ENCODE measurements at regions of chr1 and their contacts with region 1.

Region 1: GRCh38 chr1:19720973-19721372 is 56.3 kb downstream of the HTR6 start:
- DNase-seq: no peak
- H3K4me3 ChIP-seq: no peak overlapping the region
- H3K27ac ChIP-seq: no peak overlapping the region
- H3K4me1 ChIP-seq: no peaks in the 10 kb centered on the region
- H3K27me3 ChIP-seq: no peaks in the 10 kb centered on the region
- CTCF ChIP-seq: no peak

Region 2: GRCh38 chr1:19591482-19592091 is 129.4 kb before region 1 on chr1:
- CTCF ChIA-PET with region 1: no interaction called
- POLR2A ChIA-PET with region 1: interaction called, 10 read pairs
- intact Hi-C with region 1: no loop called
- DNase-seq: no peak
- H3K4me3 ChIP-seq: no peak overlapping the region
- H3K27ac ChIP-seq: no peak overlapping the region
- H3K4me1 ChIP-seq: peaks cover 5% of the 10 kb centered on the region
- H3K27me3 ChIP-seq: no peaks in the 10 kb centered on the region
- CTCF ChIP-seq: no peak

Region 3: GRCh38 chr1:19758227-19758830 is 37.4 kb after region 1 on chr1:
- CTCF ChIA-PET with region 1: no interaction called
- POLR2A ChIA-PET with region 1: no interaction called
- intact Hi-C with region 1: no loop called
- DNase-seq: no peak
- H3K4me3 ChIP-seq: no peak overlapping the region
- H3K27ac ChIP-seq: no peak overlapping the region
- H3K4me1 ChIP-seq: peaks cover 5% of the 10 kb centered on the region
- H3K27me3 ChIP-seq: no peaks in the 10 kb centered on the region
- CTCF ChIP-seq: no peak

Region 4: DNA sequence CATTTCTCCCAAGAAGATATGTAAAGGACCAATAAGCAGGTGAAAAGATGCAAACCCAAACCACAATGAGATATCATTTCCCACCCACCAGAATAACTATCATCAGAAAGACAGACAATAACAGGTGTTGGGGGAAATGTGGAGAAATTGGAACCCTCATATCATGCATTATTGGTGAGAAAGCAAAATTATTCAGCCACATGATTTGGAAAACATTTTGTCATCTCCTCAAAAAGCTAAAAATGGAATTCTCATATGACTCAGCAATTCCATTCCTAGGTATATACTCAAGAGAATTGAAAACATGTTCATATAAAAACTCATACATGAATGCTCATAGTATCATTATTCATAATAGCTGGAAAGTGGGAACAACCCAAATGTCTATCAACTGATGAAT is 119.3 kb after region 1 on chr1:
- CTCF ChIA-PET with region 1: no interaction called
- POLR2A ChIA-PET with region 1: no interaction called
- intact Hi-C with region 1: no loop called
- DNase-seq: no peak
- H3K4me3 ChIP-seq: no peak overlapping the region
- H3K27ac ChIP-seq: no peak overlapping the region
- H3K4me1 ChIP-seq: no peaks in the 10 kb centered on the region
- H3K27me3 ChIP-seq: no peaks in the 10 kb centered on the region
- CTCF ChIP-seq: no peak